ENCODE measurements at regions of chr4 and their contacts with region 1.

Region 1: GRCh38 chr4:140523857-140524742 is at the start of gene ELMOD2:
- DNase-seq: peak; percentile 93 to 99 (median 97)
- ATAC-seq: peak; percentile 98
- H3K4me3 ChIP-seq: peak within 1 kb of the TSS; percentile 72 to 77
- H3K4me3 Mint-ChIP-seq: peak within 1 kb of the TSS; percentile 89
- H3K27ac ChIP-seq: peak within 1 kb of the TSS; percentile 59 to 63
- H3K27ac Mint-ChIP-seq: peak within 1 kb of the TSS; percentile 86
- H3K4me1 ChIP-seq: peaks cover 9% of the 10 kb centered on the region
- H3K4me1 Mint-ChIP-seq: peaks cover 27% of the 10 kb centered on the region
- H3K27me3 ChIP-seq: no peaks in the 10 kb centered on the region
- H3K27me3 Mint-ChIP-seq: no peaks in the 10 kb centered on the region
- CTCF ChIP-seq: peak; percentile 88
- total RNA-seq, gene ELMOD2: 7.2 to 8.8 TPM

Region 2: DNA sequence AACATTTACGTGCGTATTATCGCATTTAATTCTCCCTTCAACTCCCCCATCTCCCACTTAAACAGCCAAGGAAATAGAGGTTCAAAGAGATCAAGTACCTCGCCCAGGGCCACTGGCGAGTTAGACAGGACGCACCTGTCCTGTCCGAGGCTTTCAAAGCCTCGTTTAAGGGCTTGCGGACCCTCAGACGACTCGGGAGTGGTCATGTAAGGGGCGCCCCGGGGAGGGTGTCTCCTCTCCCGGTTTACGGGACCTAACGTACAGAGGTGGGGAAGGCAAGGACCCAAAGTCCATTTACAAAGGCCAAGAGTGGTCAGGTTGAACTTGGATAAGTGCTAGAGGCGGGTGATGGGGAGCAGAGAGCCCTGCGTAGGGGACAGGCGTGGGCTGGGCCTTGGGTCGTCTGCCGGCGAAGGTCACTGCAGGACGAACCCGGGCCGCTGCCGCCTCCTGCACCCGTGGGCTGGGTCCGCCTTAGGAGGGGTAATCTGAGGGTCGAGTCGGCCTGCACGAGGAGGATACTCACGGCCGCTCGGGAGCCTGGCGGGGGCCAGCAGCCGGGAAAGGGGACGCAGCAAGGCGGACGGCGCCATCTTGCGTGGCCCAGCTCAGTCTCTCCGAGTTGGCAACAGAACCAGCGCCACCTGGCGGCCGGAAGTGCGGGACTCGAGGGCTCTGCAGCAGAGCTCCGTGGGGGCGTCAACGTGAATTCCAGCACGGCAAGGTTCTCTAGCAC is 1228.7 kb before region 1 on chr4:
- CTCF ChIA-PET with region 1: no interaction called
- POLR2A ChIA-PET with region 1: no interaction called
- intact Hi-C with region 1: loop called (anchors 5 kb)
- DNase-seq: peak; percentile 94 to 100 (median 99)
- ATAC-seq: peak; percentile 91
- H3K4me3 ChIP-seq: peak overlapping the region; percentile 65 to 91
- H3K4me3 Mint-ChIP-seq: peak overlapping the region; percentile 91
- H3K27ac ChIP-seq: peak overlapping the region; percentile 74 to 87
- H3K27ac Mint-ChIP-seq: peak overlapping the region; percentile 95
- H3K4me1 ChIP-seq: peaks cover 31% of the 10 kb centered on the region
- H3K4me1 Mint-ChIP-seq: peaks cover 37% of the 10 kb centered on the region
- H3K27me3 ChIP-seq: no peaks in the 10 kb centered on the region
- H3K27me3 Mint-ChIP-seq: no peaks in the 10 kb centered on the region
- CTCF ChIP-seq: peak; percentile 77

Region 3: GRCh38 chr4:139554893-139555704 is 969.0 kb before region 1 on chr4:
- CTCF ChIA-PET with region 1: no interaction called
- POLR2A ChIA-PET with region 1: no interaction called
- intact Hi-C with region 1: loop called (anchors 10 kb)
- DNase-seq: peak; percentile 43 to 89 (median 74)
- ATAC-seq: peak; percentile 75
- H3K4me3 ChIP-seq: peak overlapping the region; percentile 79 to 84
- H3K4me3 Mint-ChIP-seq: peak overlapping the region; percentile 94
- H3K27ac ChIP-seq: peak overlapping the region in 1 of 2 experiments; percentile 53
- H3K27ac Mint-ChIP-seq: peak overlapping the region; percentile 95
- H3K4me1 ChIP-seq: peaks cover 9% of the 10 kb centered on the region
- H3K4me1 Mint-ChIP-seq: peaks cover 31% of the 10 kb centered on the region
- H3K27me3 ChIP-seq: peaks cover 0 to 9% of the 10 kb centered on the region in 2 experiments
- H3K27me3 Mint-ChIP-seq: peaks cover 9% of the 10 kb centered on the region
- CTCF ChIP-seq: no peak

Region 4: DNA sequence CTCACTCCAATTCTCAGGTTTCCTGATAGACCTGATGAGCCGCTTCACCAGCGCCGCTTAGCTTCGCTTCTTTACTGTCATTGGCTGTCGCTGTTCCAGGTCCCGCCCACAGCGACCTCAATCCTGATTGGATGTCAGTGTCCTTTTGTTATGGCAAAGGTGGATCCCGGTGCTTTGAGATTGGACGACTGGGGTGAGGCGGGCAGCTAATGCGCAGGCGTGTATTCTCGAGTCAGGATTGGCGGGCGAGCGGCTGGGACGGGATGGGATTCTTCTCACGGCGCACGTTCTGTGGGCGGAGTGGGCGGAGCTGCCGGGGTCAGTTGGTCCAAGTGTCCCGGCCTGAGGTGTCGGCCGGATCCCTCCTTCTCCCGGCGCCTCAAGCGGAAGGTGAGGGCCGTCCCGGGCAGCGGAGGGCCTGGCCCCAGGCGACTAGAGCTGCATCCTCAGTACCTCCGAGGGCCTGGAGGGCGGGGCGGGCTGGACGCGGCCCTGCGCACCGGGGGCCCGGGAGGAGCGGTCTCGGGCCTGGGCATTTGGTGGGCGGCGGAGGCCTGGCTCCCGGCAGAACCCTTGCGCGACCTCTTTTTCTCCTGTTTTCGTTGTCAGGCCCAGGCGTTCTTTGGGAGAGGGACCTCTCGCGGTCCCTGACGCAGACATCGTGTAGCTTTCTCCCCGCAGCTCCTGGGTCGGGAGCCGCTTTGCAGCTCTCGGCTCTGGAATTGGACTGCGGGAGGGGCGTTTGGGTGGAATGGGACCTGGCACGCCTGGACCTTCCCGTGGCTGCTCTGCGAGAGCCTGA is 150.6 kb before region 1 on chr4 and contains the start of gene SCOC:
- CTCF ChIA-PET with region 1: interaction called, 3 read pairs
- POLR2A ChIA-PET with region 1: interaction called, 3 read pairs
- intact Hi-C with region 1: loop called (anchors 1 kb)
- DNase-seq: peak; percentile 90 to 98 (median 95)
- ATAC-seq: peak; percentile 94
- H3K4me3 ChIP-seq: peak within 1 kb of the TSS; percentile 85 to 92
- H3K4me3 Mint-ChIP-seq: no peak within 1 kb of the TSS
- H3K27ac ChIP-seq: peak within 1 kb of the TSS; percentile 81 to 85
- H3K27ac Mint-ChIP-seq: peak within 1 kb of the TSS; percentile 76
- H3K4me1 ChIP-seq: peaks cover 20% of the 10 kb centered on the region
- H3K4me1 Mint-ChIP-seq: peaks cover 37% of the 10 kb centered on the region
- H3K27me3 ChIP-seq: no peaks in the 10 kb centered on the region
- H3K27me3 Mint-ChIP-seq: no peaks in the 10 kb centered on the region
- CTCF ChIP-seq: no peak
- total RNA-seq, gene SCOC: 7.1 to 8.3 TPM

Region 5: DNA sequence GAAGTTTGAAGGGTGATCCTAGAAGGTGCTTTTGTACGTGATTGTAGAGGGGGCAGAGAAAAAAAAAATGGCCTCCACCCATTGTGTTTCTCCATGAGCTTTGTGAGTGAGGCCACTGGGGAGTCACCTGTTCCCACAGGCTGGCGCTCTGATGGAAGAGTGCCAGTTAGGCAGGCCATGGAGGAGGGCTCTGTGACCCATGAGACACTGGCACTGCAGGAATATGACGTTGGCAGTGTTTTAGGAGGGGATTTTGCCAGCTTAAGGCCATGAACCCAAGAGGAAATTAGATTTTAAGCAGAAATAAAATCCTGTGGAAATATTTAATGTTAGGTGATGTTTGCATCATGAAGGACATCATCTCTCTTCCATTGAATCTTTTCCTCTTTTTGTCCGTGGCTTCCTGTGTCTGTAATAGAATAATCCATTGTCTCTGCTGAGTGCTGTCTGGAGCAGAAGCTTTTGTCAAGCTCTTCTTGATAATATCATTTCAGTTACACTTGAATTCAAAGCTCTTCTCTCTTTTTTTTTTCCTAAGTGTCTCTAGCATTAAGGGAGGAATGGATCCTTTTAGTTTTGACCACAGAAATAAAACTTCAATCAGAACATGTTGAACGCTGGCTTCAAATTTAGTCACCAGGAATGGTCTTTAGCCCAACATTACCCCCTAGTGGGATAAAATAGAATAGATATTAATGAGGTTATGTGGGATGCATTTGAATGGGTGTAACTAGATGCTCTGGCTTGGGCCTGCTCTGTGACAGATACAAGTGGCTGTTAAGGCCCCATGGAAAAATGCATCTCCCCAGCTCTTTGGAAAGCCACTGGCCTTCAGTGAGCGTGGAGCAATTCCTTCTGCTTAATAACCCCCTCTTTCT is 85.7 kb after region 1 on chr4:
- CTCF ChIA-PET with region 1: no interaction called
- POLR2A ChIA-PET with region 1: no interaction called
- intact Hi-C with region 1: loop called in 1 of 2 experiments (anchors 1 kb)
- DNase-seq: peak in 2 of 9 experiments; percentile 13 to 48
- ATAC-seq: peak; percentile 46
- H3K4me3 ChIP-seq: no peak overlapping the region
- H3K4me3 Mint-ChIP-seq: no peak overlapping the region
- H3K27ac ChIP-seq: no peak overlapping the region
- H3K27ac Mint-ChIP-seq: no peak overlapping the region
- H3K4me1 ChIP-seq: no peaks in the 10 kb centered on the region
- H3K4me1 Mint-ChIP-seq: no peaks in the 10 kb centered on the region
- H3K27me3 ChIP-seq: peaks cover 0 to 4% of the 10 kb centered on the region in 2 experiments
- H3K27me3 Mint-ChIP-seq: peaks cover 10% of the 10 kb centered on the region
- CTCF ChIP-seq: peak; percentile 45

Region 6: GRCh38 chr4:141220655-141221605 is 696.8 kb after region 1 on chr4 and contains the start of gene ZNF330:
- CTCF ChIA-PET with region 1: no interaction called
- POLR2A ChIA-PET with region 1: no interaction called
- intact Hi-C with region 1: loop called (anchors 5 kb)
- DNase-seq: peak; percentile 79 to 95 (median 87)
- ATAC-seq: peak; percentile 91
- H3K4me3 ChIP-seq: peak within 1 kb of the TSS; percentile 88 to 91
- H3K4me3 Mint-ChIP-seq: peak within 1 kb of the TSS; percentile 95
- H3K27ac ChIP-seq: peak within 1 kb of the TSS; percentile 92
- H3K27ac Mint-ChIP-seq: peak within 1 kb of the TSS; percentile 96
- H3K4me1 ChIP-seq: peaks cover 18% of the 10 kb centered on the region
- H3K4me1 Mint-ChIP-seq: peaks cover 48% of the 10 kb centered on the region
- H3K27me3 ChIP-seq: no peaks in the 10 kb centered on the region
- H3K27me3 Mint-ChIP-seq: peaks cover 2% of the 10 kb centered on the region
- CTCF ChIP-seq: no peak
- total RNA-seq, gene ZNF330: 44.1 to 44.9 TPM

Measured in CD8-positive, alpha-beta T cell (primary cell).